ENCODE measurements at regions of chr15 and their contacts with region 1.

Region 1: GRCh38 chr15:63945007-63945788 is 101.1 kb downstream of the DAPK2 start:
- DNase-seq: peak; percentile 64 to 90
- ATAC-seq: peak; percentile 89 to 97
- H3K4me3 ChIP-seq: no peak overlapping the region
- H3K27ac ChIP-seq: peak overlapping the region in 1 of 2 experiments; percentile 12; a peak in 1 of 6 replicates
- H3K4me1 ChIP-seq: no peaks in the 10 kb centered on the region
- CTCF ChIP-seq: peak; percentile 86
- EP300 ChIP-seq: no peak
- POLR2A ChIP-seq: no peak
- RAD21 ChIP-seq: peak; percentile 62 to 76

Region 2: DNA sequence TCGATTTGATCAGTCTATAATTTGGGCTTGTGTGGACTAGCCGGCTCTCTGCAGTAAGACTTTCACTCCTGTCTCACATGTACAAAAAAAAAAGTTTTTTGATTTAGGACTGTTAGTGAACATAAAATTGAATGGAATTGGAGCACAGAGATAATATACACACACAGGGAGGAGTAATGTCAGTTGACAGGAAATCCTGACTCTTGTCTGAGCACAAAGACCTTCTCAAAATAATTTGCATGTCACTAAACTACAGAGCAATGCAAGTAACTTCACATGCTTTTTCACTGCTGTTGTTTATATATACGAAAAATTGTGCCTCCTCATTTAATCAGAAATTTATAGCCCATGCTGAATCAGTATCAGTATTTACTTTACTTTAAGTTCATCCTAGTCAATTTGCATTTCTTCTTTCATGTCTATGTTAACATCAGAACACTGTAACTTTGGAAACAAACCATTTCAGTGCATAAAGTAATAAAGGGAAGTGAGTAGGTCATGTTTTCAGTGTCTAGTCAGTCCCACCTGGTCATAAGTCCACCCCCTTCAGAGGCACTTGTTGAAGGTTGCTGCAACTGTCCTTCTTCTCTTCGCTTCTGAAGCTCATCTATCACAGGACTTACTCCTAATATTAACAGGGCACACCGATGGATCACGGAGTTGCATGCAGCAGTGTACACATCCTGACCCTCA is 232.2 kb before region 1 on chr15:
- CTCF ChIA-PET with region 1: no interaction called
- POLR2A ChIA-PET with region 1: no interaction called
- DNase-seq: no peak
- ATAC-seq: no peak
- H3K4me3 ChIP-seq: no peak overlapping the region
- H3K27ac ChIP-seq: no peak overlapping the region
- H3K4me1 ChIP-seq: peaks cover 13% of the 10 kb centered on the region
- CTCF ChIP-seq: no peak
- EP300 ChIP-seq: no peak
- POLR2A ChIP-seq: no peak
- RAD21 ChIP-seq: no peak

Region 3: DNA sequence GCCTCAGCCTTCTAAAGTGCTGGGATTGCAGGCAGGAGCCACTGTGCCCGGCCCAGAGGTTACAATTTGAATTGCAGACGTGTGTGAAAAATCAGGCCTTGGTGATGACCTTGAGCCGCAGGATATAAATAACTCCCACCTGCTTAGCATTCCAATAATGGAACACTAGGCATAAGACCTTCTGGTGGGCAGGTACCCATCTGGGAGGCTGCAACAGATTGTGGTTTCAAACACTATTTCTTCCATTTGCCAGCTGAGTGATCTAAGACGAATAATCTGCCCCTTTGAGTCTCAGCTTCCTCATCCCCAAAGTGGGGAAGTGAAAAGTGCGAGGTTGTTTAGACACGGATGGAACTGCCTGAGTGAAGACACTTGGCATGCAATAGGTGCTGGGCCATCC is 63.8 kb before region 1 on chr15:
- CTCF ChIA-PET with region 1: no interaction called
- POLR2A ChIA-PET with region 1: no interaction called
- DNase-seq: no peak
- ATAC-seq: no peak
- H3K4me3 ChIP-seq: no peak overlapping the region
- H3K27ac ChIP-seq: no peak overlapping the region
- H3K4me1 ChIP-seq: no peaks in the 10 kb centered on the region
- CTCF ChIP-seq: no peak
- EP300 ChIP-seq: no peak
- POLR2A ChIP-seq: no peak
- RAD21 ChIP-seq: no peak

Region 4: GRCh38 chr15:63905558-63906265 is 39.5 kb before region 1 on chr15:
- CTCF ChIA-PET with region 1: interaction called, 14 read pairs
- POLR2A ChIA-PET with region 1: no interaction called
- DNase-seq: no peak
- ATAC-seq: peak in 1 of 2 experiments; percentile 29; a peak in 2 of 6 replicates
- H3K4me3 ChIP-seq: no peak overlapping the region
- H3K27ac ChIP-seq: no peak overlapping the region
- H3K4me1 ChIP-seq: peaks cover 15% of the 10 kb centered on the region; the same call in 2 of the 3 replicates
- CTCF ChIP-seq: no peak
- EP300 ChIP-seq: no peak
- POLR2A ChIP-seq: no peak
- RAD21 ChIP-seq: no peak

Region 5: DNA sequence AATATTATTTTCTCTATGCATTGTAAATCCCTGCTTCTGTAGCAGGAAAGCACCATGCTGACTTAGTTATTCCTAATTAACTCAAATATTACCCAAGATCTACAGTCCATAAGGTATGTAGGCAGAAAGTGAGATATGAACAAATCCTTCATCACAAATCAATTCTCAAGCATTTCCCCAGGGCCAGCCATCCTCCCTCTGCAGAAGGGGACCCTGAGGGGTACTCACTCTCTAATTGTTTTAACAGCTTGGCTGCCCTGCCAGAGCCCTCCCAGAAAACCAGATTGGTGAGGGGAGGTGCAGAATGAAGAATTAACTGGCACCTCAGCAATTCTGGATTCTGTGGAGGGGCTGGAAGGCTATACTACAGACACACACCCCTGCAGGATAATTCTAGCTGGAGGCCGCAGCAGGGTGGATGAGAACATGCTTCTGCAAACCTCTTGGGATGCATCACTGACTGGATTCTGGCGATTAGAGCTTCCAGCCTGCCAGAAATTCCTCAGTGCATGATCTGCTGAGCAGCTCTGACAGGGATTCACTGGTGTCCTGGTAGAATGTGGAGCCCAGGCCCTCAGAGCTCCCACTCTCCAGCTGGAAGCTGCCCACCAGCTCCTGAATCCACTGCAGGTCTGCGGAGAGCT is 22.8 kb before region 1 on chr15:
- CTCF ChIA-PET with region 1: interaction called, 41 read pairs
- POLR2A ChIA-PET with region 1: no interaction called
- DNase-seq: no peak
- ATAC-seq: no peak
- H3K4me3 ChIP-seq: no peak overlapping the region
- H3K27ac ChIP-seq: no peak overlapping the region
- H3K4me1 ChIP-seq: no peaks in the 10 kb centered on the region
- CTCF ChIP-seq: no peak
- EP300 ChIP-seq: no peak
- POLR2A ChIP-seq: no peak
- RAD21 ChIP-seq: no peak

Region 6: GRCh38 chr15:63970621-63971426 is 25.6 kb after region 1 on chr15:
- CTCF ChIA-PET with region 1: interaction called, 16 read pairs
- POLR2A ChIA-PET with region 1: no interaction called
- DNase-seq: no peak
- ATAC-seq: no peak
- H3K4me3 ChIP-seq: no peak overlapping the region
- H3K27ac ChIP-seq: no peak overlapping the region
- H3K4me1 ChIP-seq: peaks cover 13% of the 10 kb centered on the region; the same call in 2 of the 3 replicates
- CTCF ChIP-seq: no peak
- EP300 ChIP-seq: no peak
- POLR2A ChIP-seq: no peak
- RAD21 ChIP-seq: no peak

Region 7: DNA sequence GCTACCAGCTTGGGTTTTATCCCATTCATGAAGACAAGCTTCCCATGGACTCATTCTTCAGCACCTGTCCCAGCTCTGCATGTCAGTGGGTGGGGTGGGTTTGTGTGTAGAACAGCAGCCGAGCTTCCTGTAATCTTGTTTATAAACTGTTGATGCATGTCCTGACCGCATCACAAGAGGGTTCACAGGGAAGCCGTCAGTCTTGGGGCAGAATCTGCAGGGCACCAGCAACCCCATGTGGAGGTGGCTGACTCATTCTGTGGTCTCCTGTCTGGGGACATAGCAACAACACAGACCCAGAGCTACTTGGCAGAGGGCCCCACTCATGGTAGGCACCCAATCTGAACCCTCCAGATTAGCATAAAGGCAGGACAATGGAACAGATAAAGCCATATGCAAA is 65.5 kb after region 1 on chr15:
- CTCF ChIA-PET with region 1: interaction called, 14 read pairs
- POLR2A ChIA-PET with region 1: no interaction called
- DNase-seq: peak in 1 of 2 experiments; percentile 49
- ATAC-seq: peak; percentile 52 to 67; a peak in 4 of 6 replicates
- H3K4me3 ChIP-seq: no peak overlapping the region
- H3K27ac ChIP-seq: no peak overlapping the region
- H3K4me1 ChIP-seq: peaks cover 25% of the 10 kb centered on the region; the same call in 2 of the 3 replicates
- CTCF ChIP-seq: no peak
- EP300 ChIP-seq: no peak
- POLR2A ChIP-seq: no peak
- RAD21 ChIP-seq: no peak